CD14-positive monocyte (primary cell): ENCODE measurements at regions of chr1 and their contacts with region 1.

Region 1: GRCh38 chr1:226687426-226687825 is 51.7 kb downstream of the ITPKB start:
- DNase-seq: peak; percentile 40 to 55 (median 41)
- H3K4me3 ChIP-seq: no peak overlapping the region
- H3K4me3 Mint-ChIP-seq: no peak overlapping the region
- H3K27ac ChIP-seq: no peak overlapping the region
- H3K27ac Mint-ChIP-seq: peak overlapping the region in 3 of 7 donors; percentile 64 to 80 (median 67)
- H3K4me1 ChIP-seq: no peaks in the 10 kb centered on the region
- H3K4me1 Mint-ChIP-seq: peaks cover 47% of the 10 kb centered on the region
- H3K27me3 ChIP-seq: no peaks in the 10 kb centered on the region
- H3K27me3 Mint-ChIP-seq: peaks cover 0 to 2% (median 0%) of the 10 kb centered on the region in 3 donors
- CTCF ChIP-seq: peak; percentile 34

Region 2: DNA sequence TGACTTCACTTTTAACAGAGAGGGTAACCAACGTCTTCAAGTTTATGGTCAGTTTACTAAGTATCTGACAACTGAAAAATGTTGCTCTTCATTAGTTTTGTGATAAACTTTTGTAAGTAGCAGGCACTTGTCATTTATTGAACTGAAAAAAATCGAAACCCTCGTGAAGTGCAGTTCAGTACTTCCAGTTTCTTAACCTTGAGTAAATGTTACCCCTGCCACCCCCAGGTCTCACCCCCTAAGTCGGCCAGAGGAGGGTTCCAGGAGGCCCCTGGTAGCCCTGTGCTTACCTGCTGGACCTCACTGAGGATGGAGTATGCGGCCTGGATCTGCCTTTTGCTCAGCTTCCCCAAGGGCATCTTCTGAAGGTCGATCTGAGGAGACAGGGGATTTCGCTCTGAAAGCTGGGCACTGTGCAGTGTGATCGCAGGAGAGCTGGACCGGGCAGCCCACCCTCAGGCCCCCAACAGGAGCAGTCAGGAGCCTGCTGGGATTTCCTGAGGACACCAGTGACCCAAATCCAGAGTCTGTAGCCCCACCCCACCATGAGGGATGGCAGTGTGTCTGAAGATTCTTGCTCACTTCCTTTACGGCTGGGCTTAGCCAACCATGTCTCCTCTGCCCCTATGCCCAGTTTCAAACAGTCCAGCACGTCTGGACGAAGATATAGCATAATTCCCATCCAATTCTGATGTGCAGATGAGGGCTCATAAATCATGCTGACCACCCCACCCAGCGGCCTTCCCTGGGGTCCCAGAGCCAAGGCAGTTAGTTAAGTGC is 317.1 kb before region 1 on chr1:
- intact Hi-C with region 1: no loop called
- DNase-seq: no peak
- H3K4me3 ChIP-seq: no peak overlapping the region
- H3K4me3 Mint-ChIP-seq: no peak overlapping the region
- H3K27ac ChIP-seq: no peak overlapping the region
- H3K27ac Mint-ChIP-seq: peak overlapping the region in 1 of 7 donors; percentile 10
- H3K4me1 ChIP-seq: no peaks in the 10 kb centered on the region
- H3K4me1 Mint-ChIP-seq: peaks cover 1% of the 10 kb centered on the region
- H3K27me3 ChIP-seq: no peaks in the 10 kb centered on the region
- H3K27me3 Mint-ChIP-seq: peaks cover 0 to 2% (median 1%) of the 10 kb centered on the region in 3 donors
- CTCF ChIP-seq: no peak

Region 3: GRCh38 chr1:226584164-226584563 is 103.3 kb before region 1 on chr1:
- intact Hi-C with region 1: no loop called
- DNase-seq: peak in 1 of 3 donors; percentile 1
- H3K4me3 ChIP-seq: no peak overlapping the region
- H3K4me3 Mint-ChIP-seq: no peak overlapping the region
- H3K27ac ChIP-seq: no peak overlapping the region
- H3K27ac Mint-ChIP-seq: peak overlapping the region in 1 of 7 donors; percentile 39
- H3K4me1 ChIP-seq: peaks cover 19 to 27% of the 10 kb centered on the region in 2 donors
- H3K4me1 Mint-ChIP-seq: peaks cover 44% of the 10 kb centered on the region
- H3K27me3 ChIP-seq: no peaks in the 10 kb centered on the region
- H3K27me3 Mint-ChIP-seq: peaks cover 0 to 2% (median 2%) of the 10 kb centered on the region in 3 donors
- CTCF ChIP-seq: no peak

Region 4: DNA sequence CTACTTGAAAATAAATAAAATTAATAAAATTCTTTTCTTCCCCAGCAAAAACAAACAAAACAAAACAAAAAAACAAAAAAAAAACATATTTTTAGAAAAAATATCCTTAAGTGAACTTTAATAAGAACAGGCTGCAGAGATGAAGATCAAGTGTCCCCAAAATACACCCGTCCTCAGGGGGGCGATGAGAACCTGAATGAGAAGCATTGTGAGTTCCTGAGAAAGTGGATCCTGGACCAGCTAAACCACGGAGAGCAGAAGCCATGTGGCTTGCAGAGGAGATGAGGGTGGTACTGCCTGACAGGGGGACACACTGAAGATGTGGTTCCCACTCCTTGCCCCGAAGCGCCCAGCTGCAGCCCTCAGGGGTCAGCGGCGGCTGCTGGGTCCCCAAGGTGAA is 37.6 kb before region 1 on chr1:
- intact Hi-C with region 1: loop called in 1 of 2 experiments (anchors 5 kb)
- DNase-seq: peak in 2 of 3 donors; percentile 35 to 42
- H3K4me3 ChIP-seq: no peak overlapping the region
- H3K4me3 Mint-ChIP-seq: no peak overlapping the region
- H3K27ac ChIP-seq: no peak overlapping the region
- H3K27ac Mint-ChIP-seq: peak overlapping the region in 3 of 7 donors; percentile 19 to 61 (median 53)
- H3K4me1 ChIP-seq: peaks cover 19 to 22% of the 10 kb centered on the region in 2 donors
- H3K4me1 Mint-ChIP-seq: peaks cover 23% of the 10 kb centered on the region
- H3K27me3 ChIP-seq: no peaks in the 10 kb centered on the region
- H3K27me3 Mint-ChIP-seq: peaks cover 0 to 5% (median 3%) of the 10 kb centered on the region in 3 donors
- CTCF ChIP-seq: peak; percentile 14